CD8-positive, alpha-beta memory T cell (primary cell): ENCODE measurements at regions of chr19 and their contacts with region 1.

Region 1: DNA sequence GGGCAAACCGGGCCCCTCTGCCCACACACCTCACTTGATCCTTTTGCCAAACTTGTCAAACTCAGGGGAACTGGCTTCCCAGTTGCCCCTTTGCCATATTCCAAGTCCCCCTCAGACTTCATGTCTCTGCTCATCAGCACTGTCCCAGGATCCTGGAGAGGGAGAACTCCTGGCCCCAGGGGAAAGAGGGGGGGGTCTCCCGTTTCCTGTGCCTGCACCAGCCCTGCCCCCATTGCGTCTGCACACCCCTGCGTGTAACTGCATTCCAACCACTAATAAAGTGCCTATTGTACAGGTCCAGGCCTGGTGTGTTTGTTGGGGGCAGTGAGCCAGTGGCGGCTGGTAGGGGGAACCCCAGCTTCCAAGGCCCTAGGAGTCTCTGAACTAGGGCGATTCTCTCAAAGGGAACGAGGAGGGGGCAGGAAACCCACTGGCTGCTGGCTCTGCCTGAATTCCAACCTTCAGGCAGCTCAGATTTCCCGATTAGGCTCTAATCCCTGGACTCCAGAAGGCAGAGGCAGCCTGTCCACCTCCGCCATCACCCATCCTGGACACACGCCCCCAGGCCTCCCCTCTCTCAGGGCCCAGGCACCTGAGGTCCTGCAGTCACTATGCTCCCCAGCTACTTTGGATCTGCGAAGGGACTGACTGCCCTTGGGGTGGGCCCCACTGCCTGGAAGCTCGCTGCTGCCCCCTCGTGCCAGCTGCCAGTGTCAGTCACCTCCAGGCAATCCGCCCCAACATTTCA is 9.7 kb upstream of the ILF3 start:
- DNase-seq: peak; percentile 77 to 89 (median 83)
- H3K4me3 ChIP-seq: no peak overlapping the region
- H3K4me3 Mint-ChIP-seq: no peak overlapping the region
- H3K27ac ChIP-seq: no peak overlapping the region
- H3K27ac Mint-ChIP-seq: peak overlapping the region; percentile 21 to 92 (median 78)
- H3K4me1 ChIP-seq: peaks cover 22% of the 10 kb centered on the region
- H3K4me1 Mint-ChIP-seq: peaks cover 16 to 23% (median 16%) of the 10 kb centered on the region in 3 donors
- H3K27me3 ChIP-seq: no peaks in the 10 kb centered on the region
- H3K27me3 Mint-ChIP-seq: peaks cover 0 to 2% of the 10 kb centered on the region in 2 donors

Region 2: DNA sequence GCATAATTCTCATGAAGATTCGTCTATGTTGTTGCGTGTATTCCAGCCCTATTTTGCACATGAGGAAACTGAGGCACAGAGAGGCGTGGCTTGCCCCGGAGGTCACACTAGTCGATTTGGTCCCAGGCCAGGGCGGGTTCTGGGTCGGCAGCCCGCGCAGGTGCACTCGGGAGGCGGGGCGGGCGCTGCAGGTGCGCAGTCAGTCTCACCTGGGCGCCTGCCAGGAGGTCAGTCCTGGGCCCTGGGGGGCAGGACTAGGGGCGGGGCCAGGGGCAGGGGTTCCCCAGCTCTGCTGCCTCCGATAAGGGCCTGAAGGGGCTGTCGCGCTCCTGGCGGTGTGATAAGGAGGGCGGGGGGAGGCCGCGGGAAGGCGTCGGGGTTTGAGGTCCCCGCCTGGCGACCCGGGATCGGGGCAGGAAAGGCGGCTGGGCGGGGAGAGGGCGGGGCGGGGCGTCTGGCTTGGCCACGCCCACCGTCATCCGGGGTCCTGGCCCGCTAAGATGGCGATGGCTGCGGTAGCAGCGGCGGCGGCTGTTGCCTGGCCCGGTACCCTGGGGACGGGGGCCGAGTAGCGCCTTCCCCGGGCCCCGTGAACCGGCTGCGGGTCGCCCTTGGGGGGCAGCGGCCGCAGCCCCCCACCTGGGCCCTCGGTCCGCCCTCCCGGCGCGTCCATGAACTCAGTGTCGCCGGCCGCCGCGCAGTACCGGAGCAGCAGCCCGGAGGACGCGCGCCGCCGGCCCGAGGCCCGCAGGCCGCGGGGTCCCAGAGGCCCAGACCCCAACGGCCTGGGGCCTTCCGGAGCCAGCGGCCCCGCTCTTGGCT is 100.8 kb before region 1 on chr19 and contains the start of gene ATG4D:
- CTCF ChIA-PET with region 1: interaction called, 12 read pairs
- POLR2A ChIA-PET with region 1: interaction called, 3 read pairs
- DNase-seq: peak; percentile 78 to 88 (median 81)
- H3K4me3 ChIP-seq: peak within 1 kb of the TSS; percentile 61
- H3K4me3 Mint-ChIP-seq: peak within 1 kb of the TSS; percentile 90 to 96 (median 93)
- H3K27ac ChIP-seq: peak within 1 kb of the TSS; percentile 79
- H3K27ac Mint-ChIP-seq: peak within 1 kb of the TSS; percentile 86 to 97 (median 93)
- H3K4me1 ChIP-seq: peaks cover 17% of the 10 kb centered on the region
- H3K4me1 Mint-ChIP-seq: peaks cover 11 to 27% (median 14%) of the 10 kb centered on the region in 3 donors
- H3K27me3 ChIP-seq: no peaks in the 10 kb centered on the region
- H3K27me3 Mint-ChIP-seq: peaks cover 2 to 8% of the 10 kb centered on the region in 2 donors
- total RNA-seq, gene ATG4D: 44.4 to 45.1 TPM

Region 3: GRCh38 chr19:10593820-10594637 is 50.4 kb before region 1 on chr19:
- CTCF ChIA-PET with region 1: interaction called, 33 read pairs
- POLR2A ChIA-PET with region 1: interaction called, 3 read pairs
- DNase-seq: no peak
- H3K4me3 ChIP-seq: no peak overlapping the region
- H3K4me3 Mint-ChIP-seq: peak overlapping the region in 1 of 7 donors; percentile 42
- H3K27ac ChIP-seq: no peak overlapping the region
- H3K27ac Mint-ChIP-seq: peak overlapping the region in 1 of 8 donors; percentile 68
- H3K4me1 ChIP-seq: peaks cover 16% of the 10 kb centered on the region
- H3K4me1 Mint-ChIP-seq: peaks cover 24 to 26% (median 25%) of the 10 kb centered on the region in 3 donors
- H3K27me3 ChIP-seq: no peaks in the 10 kb centered on the region
- H3K27me3 Mint-ChIP-seq: no peaks in the 10 kb centered on the region

Region 4: DNA sequence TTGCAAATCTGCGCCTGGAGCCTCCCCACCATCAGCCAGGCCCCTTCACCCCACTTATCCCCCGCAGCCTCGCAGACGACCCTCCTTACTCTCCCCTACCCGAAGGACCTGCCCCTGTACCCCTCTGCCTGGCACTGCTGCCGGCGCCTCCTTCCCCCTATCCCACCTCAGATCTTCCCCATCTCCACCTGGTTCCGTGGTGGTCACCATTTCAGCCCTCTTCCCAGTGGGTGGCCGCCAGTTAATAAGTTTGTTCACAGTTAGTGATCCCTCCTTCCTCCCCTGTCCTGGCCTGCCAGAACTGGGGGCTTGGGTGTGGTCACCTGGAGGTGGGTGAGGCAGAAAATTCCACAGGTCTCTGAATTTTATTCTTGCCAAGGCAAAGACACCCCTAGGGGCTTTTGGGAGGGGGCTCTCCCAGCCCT is 18.6 kb before region 1 on chr19:
- CTCF ChIA-PET with region 1: interaction called, 11 read pairs
- POLR2A ChIA-PET with region 1: interaction called, 4 read pairs
- DNase-seq: no peak
- H3K4me3 ChIP-seq: no peak overlapping the region
- H3K4me3 Mint-ChIP-seq: no peak overlapping the region
- H3K27ac ChIP-seq: no peak overlapping the region
- H3K27ac Mint-ChIP-seq: peak overlapping the region in 4 of 8 donors; percentile 51 to 92 (median 56)
- H3K4me1 ChIP-seq: peaks cover 24% of the 10 kb centered on the region
- H3K4me1 Mint-ChIP-seq: peaks cover 29 to 41% (median 38%) of the 10 kb centered on the region in 3 donors
- H3K27me3 ChIP-seq: no peaks in the 10 kb centered on the region
- H3K27me3 Mint-ChIP-seq: no peaks in the 10 kb centered on the region

Region 5: GRCh38 chr19:10701955-10702525 is 57.6 kb after region 1 on chr19:
- CTCF ChIA-PET with region 1: interaction called, 19 read pairs
- POLR2A ChIA-PET with region 1: interaction called, 5 read pairs
- DNase-seq: peak in 1 of 5 donors; percentile 53
- H3K4me3 ChIP-seq: peak overlapping the region; percentile 93
- H3K4me3 Mint-ChIP-seq: peak overlapping the region; percentile 84 to 97 (median 94)
- H3K27ac ChIP-seq: peak overlapping the region; percentile 51
- H3K27ac Mint-ChIP-seq: peak overlapping the region; percentile 24 to 81 (median 62)
- H3K4me1 ChIP-seq: peaks cover 10% of the 10 kb centered on the region
- H3K4me1 Mint-ChIP-seq: peaks cover 12 to 14% (median 13%) of the 10 kb centered on the region in 3 donors
- H3K27me3 ChIP-seq: no peaks in the 10 kb centered on the region
- H3K27me3 Mint-ChIP-seq: peaks cover 2 to 7% of the 10 kb centered on the region in 2 donors